Ascending aorta (tissue), 2 donors: ENCODE measurements at regions of chr20 and their contacts with region 1.

Region 1: GRCh38 chr20:1118336-1119127 is at the start of gene PSMF1:
- DNase-seq: peak; percentile 77 to 96
- H3K4me3 ChIP-seq: peak within 1 kb of the TSS; percentile 99
- H3K27ac ChIP-seq: peak within 1 kb of the TSS; percentile 74 to 80
- H3K4me1 ChIP-seq: peaks cover 8 to 44% of the 10 kb centered on the region in 2 donors
- H3K27me3 ChIP-seq: no peaks in the 10 kb centered on the region
- CTCF ChIP-seq: peak; percentile 3 to 28 (median 10)
- total RNA-seq, gene PSMF1: 46.8 TPM

Region 2: DNA sequence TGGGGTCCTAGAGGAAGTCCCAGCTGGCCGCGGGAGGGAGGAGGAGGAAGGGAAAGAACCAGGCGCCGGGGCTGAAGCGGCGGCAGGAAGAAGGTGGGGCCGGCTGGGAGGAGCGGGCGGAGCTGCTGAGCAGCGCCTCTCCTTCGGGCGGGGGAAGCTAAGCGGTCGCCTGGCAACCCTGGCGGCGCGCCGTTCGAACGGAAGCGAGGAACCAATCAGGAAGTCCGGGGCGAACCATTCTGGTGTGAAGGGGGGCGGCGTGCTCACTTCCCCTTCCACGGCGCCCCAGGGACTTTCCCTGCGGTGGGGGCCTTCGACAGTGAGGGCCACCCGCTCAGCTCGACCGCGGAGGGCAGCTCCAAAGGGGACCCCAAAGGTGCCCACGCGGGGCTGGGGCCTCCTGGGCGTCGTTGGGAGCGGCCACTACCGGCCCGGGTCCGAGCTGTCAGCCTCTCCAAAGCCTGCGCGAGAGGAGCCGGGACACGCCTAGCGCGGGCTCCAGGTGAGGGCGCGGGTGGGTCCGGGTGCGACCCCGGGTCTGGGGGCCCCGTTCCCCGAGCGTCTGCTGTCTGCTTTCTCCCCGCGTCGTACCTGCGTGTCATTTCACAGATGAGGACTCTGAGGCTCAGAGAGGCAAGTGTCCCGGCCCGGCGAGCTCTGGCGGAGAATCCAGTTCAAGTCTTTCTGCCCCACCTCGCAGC is 284.9 kb before region 1 on chr20 and contains the start of gene FAM110A:
- intact Hi-C with region 1: loop called (anchors 2 kb)
- DNase-seq: peak; percentile 87 to 97
- H3K4me3 ChIP-seq: peak within 1 kb of the TSS; percentile 90
- H3K27ac ChIP-seq: peak within 1 kb of the TSS; percentile 72 to 78
- H3K4me1 ChIP-seq: peaks cover 4 to 17% of the 10 kb centered on the region in 2 donors
- H3K27me3 ChIP-seq: no peaks in the 10 kb centered on the region
- CTCF ChIP-seq: no peak
- total RNA-seq, gene FAM110A: 9.7 TPM

Region 3: GRCh38 chr20:1392823-1393506 is 274.4 kb after region 1 on chr20 and contains the start of gene FKBP1A:
- intact Hi-C with region 1: loop called (anchors 2 kb)
- DNase-seq: peak; percentile 51 to 94
- H3K4me3 ChIP-seq: peak within 1 kb of the TSS; percentile 80 to 92
- H3K27ac ChIP-seq: peak within 1 kb of the TSS; percentile 84 to 86
- H3K4me1 ChIP-seq: peaks cover 13 to 41% of the 10 kb centered on the region in 2 donors
- H3K27me3 ChIP-seq: no peaks in the 10 kb centered on the region
- CTCF ChIP-seq: peak in 2 of 3 experiments; percentile 13 to 19
- total RNA-seq, gene FKBP1A: 202 TPM

Region 4: DNA sequence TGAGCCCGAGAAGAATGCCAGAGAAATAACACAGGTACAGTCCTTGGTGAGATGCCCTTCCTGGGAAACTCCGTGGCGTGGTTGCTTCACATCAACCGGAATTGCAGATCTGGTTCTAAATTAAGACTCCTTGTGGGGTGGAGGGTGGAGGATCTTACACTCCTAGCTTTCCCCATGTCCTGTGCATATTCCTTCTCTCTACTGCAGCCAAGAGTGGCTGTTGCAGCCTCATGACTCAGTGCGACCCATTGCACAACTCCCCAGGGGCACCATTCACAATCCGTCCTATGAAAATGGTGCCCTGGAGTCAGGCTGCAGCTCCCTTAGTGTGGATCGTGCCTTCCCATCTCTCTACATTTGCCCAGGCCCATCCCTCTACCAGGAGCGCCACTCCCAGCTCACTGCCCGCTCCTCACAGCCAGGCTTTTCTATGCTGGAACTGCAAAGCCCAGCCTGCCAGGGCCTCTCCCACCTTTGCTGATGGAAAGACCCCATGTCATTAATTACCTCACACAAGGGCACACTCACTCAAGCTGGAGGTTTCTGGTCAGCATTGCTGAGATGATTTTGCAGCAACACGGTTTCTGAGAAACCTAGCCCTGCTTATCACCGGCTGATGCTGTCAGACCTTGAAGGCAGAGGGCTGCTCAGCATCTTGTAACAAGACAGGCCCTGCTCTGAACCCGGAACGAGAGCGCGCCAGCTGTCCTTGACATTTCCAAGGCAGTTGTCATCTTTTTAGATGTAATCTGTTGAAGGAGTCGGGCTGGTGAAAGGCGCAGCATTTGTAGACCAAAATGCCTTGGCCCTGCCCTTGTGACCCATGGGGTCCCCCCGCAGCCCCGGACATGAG is 816.4 kb after region 1 on chr20:
- intact Hi-C with region 1: loop called (anchors 5 kb)
- DNase-seq: peak; percentile 43 to 93
- H3K4me3 ChIP-seq: no peak overlapping the region
- H3K27ac ChIP-seq: peak overlapping the region; percentile 32 to 68
- H3K4me1 ChIP-seq: peaks cover 0 to 8% of the 10 kb centered on the region in 2 donors
- H3K27me3 ChIP-seq: no peaks in the 10 kb centered on the region
- CTCF ChIP-seq: no peak

Region 5: DNA sequence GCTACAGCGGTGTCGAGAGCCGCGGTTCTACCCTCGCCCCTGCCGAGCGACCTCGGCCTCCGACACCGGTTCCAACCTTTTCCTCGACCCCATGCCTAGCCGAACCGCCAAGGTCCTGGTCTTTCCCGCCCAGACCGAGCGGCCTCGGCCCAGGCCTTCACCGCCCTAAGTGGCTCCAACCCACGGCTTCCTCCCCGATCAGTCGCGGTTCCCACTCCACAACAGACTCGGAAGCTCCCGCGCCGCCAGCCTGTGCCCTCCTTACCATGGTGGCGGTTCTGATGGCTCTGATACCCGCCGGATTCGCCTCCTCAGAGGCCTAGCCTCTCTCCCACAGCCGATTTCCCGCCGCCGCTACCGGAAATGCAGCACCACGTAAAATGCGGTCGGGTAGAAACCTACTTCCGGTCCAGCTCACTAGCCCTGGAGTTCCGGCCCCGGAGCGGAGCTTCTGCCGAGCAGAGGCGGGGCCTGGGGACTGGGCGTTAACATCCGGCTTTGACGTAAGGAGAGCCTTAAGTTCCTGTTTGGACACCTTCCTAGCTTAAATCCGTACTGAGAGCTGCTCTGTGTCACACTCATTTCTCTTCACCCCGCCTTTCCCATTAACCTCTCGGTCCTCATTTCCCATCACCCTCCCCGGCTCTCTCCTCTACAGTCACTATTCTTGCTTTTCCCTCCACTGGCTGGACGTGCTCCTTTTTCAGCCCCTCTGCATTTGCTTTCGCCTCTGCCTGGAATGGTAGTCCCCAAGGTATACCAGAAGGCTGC is 1352.1 kb after region 1 on chr20 and contains the start of gene SNRPB:
- intact Hi-C with region 1: loop called (anchors 2 kb)
- DNase-seq: peak; percentile 88 to 99
- H3K4me3 ChIP-seq: peak within 1 kb of the TSS; percentile 76 to 81
- H3K27ac ChIP-seq: peak within 1 kb of the TSS; percentile 94 to 96
- H3K4me1 ChIP-seq: peaks cover 4 to 18% of the 10 kb centered on the region in 2 donors
- H3K27me3 ChIP-seq: no peaks in the 10 kb centered on the region
- CTCF ChIP-seq: no peak
- total RNA-seq, gene SNRPB: 83.5 TPM